CD14-positive monocyte (primary cell): ENCODE measurements at regions of chr13 and their contacts with region 1.

Region 1: DNA sequence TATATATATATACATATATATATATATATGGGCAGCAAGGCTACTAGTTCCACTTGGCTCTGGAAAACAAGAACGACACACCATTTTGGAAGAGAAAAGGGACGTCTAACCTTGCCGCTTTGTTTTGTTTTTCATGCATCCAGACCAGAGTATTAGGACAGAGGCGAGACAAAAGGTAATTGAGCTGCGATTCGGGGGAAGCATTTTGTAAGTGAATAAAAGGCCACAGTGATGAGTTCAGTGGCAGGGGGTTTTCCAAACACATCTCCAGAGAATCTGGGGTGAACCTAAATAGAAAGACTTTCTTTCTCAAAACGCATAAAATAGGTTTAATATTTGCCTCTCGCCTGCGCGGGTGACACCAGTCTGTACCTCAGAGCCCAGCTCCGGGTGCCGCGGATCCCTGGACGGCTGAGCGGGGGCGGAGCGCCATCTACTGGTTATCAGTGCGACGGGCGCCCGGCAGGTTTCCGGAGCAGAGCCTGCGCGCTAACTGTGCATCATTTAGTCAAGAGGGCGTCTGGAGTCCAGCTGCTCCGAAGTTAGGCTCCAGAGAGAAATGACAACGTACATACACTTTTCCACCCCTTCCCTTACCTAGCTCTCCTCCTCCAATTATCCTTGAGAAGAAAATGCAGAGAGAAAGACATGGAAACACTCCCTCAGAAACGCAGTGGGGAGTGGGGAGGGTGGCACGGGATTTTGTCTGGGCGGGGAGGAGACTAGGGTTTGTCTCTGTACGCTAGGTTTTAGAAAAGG is 262.3 kb downstream of the TBC1D4 start:
- DNase-seq: peak; percentile 21 to 43 (median 32)
- H3K4me3 ChIP-seq: no peak overlapping the region
- H3K4me3 Mint-ChIP-seq: peak overlapping the region in 1 of 2 donors; percentile 28
- H3K27ac ChIP-seq: no peak overlapping the region
- H3K27ac Mint-ChIP-seq: no peak overlapping the region
- H3K4me1 ChIP-seq: peaks cover 4 to 17% of the 10 kb centered on the region in 2 donors
- H3K4me1 Mint-ChIP-seq: peaks cover 22% of the 10 kb centered on the region
- H3K27me3 ChIP-seq: peaks cover 0 to 10% of the 10 kb centered on the region in 2 donors
- H3K27me3 Mint-ChIP-seq: peaks cover under 1 to 16% (median 15%) of the 10 kb centered on the region in 3 donors
- CTCF ChIP-seq: peak; percentile 79

Region 2: DNA sequence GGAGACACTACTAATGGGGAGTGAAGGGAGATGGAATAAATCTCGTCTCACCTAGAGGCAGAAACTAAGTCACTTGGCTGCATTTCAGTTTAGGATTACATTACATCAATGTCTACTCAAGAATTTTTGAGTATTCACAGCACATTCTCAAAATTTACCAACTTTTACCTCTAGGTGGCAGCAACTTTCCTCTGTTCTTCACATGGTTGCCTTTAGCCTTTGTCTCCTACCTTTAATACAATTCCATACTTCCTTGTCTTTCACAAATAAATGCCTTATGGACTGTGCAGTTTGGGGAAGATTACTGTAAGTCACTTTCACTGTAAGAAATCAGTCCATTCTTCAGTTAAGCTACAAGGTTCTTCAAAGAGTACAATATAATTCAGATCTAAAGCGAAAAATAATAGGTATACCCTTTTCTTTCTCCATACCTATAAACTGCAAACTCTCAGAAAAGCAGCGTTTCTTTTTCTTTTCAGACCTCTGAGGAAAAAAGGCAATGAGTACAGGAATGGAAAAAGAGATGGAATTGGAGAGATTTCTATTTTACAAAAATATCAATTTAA is 1464.8 kb before region 1 on chr13:
- intact Hi-C with region 1: loop called in 1 of 2 experiments (anchors 10 kb)
- DNase-seq: peak in 2 of 3 donors; percentile 10 to 12
- H3K4me3 ChIP-seq: no peak overlapping the region
- H3K4me3 Mint-ChIP-seq: no peak overlapping the region
- H3K27ac ChIP-seq: no peak overlapping the region
- H3K27ac Mint-ChIP-seq: no peak overlapping the region
- H3K4me1 ChIP-seq: no peaks in the 10 kb centered on the region
- H3K4me1 Mint-ChIP-seq: no peaks in the 10 kb centered on the region
- H3K27me3 ChIP-seq: no peaks in the 10 kb centered on the region
- H3K27me3 Mint-ChIP-seq: no peaks in the 10 kb centered on the region
- CTCF ChIP-seq: peak; percentile 72

Region 3: DNA sequence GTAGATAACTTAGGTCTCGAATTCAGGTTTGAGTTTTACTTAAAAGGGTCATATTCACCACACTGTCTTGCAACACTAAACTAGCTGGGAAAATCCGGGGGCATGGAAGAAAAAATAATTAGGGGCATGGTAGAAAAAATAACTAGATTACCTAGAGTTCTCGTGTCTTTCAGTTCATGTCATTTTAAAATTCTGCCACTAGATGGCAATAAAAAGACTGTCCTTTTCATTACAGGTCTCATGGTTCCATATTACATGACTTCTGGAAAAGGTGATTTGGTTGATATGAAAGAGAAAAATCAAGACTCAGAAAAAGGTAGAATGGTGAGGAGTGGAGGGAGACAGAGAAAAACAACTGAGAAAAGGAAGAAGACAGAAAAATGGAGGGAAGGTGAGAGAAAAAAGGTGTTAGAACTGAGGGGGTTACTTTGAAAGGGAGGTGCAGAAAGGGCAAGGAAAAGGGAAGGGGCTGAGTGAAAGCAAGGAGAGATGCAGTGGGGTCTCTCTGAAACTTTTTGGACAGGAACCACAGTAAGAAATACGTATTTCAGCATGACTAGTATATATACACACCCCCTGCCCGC is 1384.4 kb before region 1 on chr13:
- intact Hi-C with region 1: loop called (anchors 5 to 10 kb)
- DNase-seq: peak in 1 of 3 donors; percentile 7
- H3K4me3 ChIP-seq: no peak overlapping the region
- H3K4me3 Mint-ChIP-seq: no peak overlapping the region
- H3K27ac ChIP-seq: no peak overlapping the region
- H3K27ac Mint-ChIP-seq: no peak overlapping the region
- H3K4me1 ChIP-seq: no peaks in the 10 kb centered on the region
- H3K4me1 Mint-ChIP-seq: no peaks in the 10 kb centered on the region
- H3K27me3 ChIP-seq: no peaks in the 10 kb centered on the region
- H3K27me3 Mint-ChIP-seq: no peaks in the 10 kb centered on the region
- CTCF ChIP-seq: peak; percentile 79

Region 4: GRCh38 chr13:74523057-74523456 is 696.6 kb before region 1 on chr13:
- intact Hi-C with region 1: no loop called
- DNase-seq: no peak
- H3K4me3 ChIP-seq: no peak overlapping the region
- H3K4me3 Mint-ChIP-seq: no peak overlapping the region
- H3K27ac ChIP-seq: no peak overlapping the region
- H3K27ac Mint-ChIP-seq: peak overlapping the region in 1 of 7 donors; percentile 18
- H3K4me1 ChIP-seq: no peaks in the 10 kb centered on the region
- H3K4me1 Mint-ChIP-seq: no peaks in the 10 kb centered on the region
- H3K27me3 ChIP-seq: no peaks in the 10 kb centered on the region
- H3K27me3 Mint-ChIP-seq: peaks cover 0 to under 1% (median 0%) of the 10 kb centered on the region in 3 donors
- CTCF ChIP-seq: no peak

Region 5: DNA sequence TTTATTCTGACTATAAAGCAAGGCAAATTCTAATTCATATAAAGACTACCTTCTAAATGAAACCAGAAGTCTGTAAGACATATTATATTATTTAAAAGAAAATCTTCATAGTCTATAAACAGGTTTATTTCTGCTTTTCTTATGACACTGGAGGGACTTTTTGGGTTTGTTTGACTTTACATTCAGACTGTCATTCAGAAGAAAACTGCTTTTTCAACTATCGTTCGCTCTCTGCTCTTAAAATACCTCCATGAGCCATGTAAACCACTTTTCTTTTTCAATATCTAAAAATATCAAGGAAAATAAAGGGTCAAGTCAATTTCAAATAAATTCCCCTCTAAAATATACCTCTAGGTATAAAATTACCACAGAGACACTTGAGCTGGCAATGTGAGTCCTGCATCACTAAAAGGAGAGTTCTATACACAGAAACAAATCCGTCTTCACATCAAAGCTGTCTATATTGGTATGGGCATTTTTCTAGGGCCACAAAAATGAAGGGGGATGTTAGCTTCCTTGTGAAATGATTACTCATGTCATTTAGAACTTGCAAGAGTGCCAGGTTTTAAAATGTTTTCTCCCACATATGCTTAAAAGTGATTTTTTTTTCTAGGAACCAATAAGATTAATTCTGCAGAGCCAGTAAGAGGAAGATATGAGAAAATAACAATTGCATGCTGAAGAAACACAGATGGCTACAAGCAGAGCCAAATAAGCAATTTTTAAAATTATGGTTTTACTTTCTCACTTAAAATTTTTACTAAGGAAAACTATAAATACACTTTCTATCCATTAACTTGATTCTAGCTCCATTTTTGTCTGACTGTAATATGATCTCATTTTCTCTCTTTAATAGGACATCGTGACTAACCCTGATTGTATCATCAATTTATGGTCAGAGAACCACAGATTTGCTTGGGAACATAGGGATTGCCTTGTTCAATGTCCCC is 80.5 kb after region 1 on chr13:
- intact Hi-C with region 1: no loop called
- DNase-seq: no peak
- H3K4me3 ChIP-seq: no peak overlapping the region
- H3K4me3 Mint-ChIP-seq: no peak overlapping the region
- H3K27ac ChIP-seq: no peak overlapping the region
- H3K27ac Mint-ChIP-seq: no peak overlapping the region
- H3K4me1 ChIP-seq: no peaks in the 10 kb centered on the region
- H3K4me1 Mint-ChIP-seq: no peaks in the 10 kb centered on the region
- H3K27me3 ChIP-seq: no peaks in the 10 kb centered on the region
- H3K27me3 Mint-ChIP-seq: peaks cover 0 to 2% (median 1%) of the 10 kb centered on the region in 3 donors
- CTCF ChIP-seq: no peak